ENCODE measurements at regions of chr10 and their contacts with region 1.

Region 1: DNA sequence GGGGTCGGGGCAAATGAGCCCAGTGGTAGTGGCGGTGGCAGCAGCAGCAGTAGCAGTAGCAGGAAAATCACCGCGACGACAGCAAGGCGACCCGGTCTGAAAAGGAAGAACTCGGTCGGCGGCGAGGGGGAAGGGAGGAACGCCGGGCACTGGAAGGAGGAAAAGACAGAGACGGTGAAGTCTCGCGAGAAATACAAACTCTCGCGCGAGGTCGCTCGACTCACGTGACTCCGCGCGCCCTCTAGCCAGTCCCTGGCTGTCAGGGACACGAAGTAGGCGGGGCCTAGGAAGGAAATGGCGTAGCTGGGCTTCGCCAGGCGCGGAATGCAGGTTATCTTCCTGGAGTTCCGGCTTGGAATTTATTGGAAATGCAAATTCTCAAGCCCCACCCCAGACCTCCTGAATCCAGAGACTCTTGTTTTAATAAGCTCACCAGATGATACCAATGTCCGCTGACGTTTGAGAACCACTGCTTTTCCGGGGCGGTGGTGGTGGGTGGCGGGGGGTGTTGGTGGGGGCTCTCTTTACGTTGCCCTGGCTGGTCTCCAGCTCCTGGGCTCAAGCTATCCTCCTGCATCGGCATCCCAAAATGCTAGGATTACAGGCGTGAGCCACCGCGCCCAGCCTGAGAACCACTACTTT is at the start of gene SMNDC1:
- DNase-seq: peak; percentile 99
- H3K4me3 Mint-ChIP-seq: peak within 1 kb of the TSS; percentile 95
- H3K27ac Mint-ChIP-seq: peak within 1 kb of the TSS; percentile 97
- H3K4me1 Mint-ChIP-seq: peaks cover 51% of the 10 kb centered on the region
- H3K27me3 Mint-ChIP-seq: no peaks in the 10 kb centered on the region
- total RNA-seq, gene SMNDC1: 42.4 to 46.2 TPM

Region 2: GRCh38 chr10:110273474-110273873 is 31.4 kb before region 1 on chr10:
- CTCF ChIA-PET with region 1: no interaction called
- intact Hi-C with region 1: loop called (anchors 2 kb)
- DNase-seq: peak; percentile 74
- H3K4me3 Mint-ChIP-seq: no peak overlapping the region
- H3K27ac Mint-ChIP-seq: no peak overlapping the region
- H3K4me1 Mint-ChIP-seq: peaks cover 49% of the 10 kb centered on the region
- H3K27me3 Mint-ChIP-seq: no peaks in the 10 kb centered on the region

Region 3: DNA sequence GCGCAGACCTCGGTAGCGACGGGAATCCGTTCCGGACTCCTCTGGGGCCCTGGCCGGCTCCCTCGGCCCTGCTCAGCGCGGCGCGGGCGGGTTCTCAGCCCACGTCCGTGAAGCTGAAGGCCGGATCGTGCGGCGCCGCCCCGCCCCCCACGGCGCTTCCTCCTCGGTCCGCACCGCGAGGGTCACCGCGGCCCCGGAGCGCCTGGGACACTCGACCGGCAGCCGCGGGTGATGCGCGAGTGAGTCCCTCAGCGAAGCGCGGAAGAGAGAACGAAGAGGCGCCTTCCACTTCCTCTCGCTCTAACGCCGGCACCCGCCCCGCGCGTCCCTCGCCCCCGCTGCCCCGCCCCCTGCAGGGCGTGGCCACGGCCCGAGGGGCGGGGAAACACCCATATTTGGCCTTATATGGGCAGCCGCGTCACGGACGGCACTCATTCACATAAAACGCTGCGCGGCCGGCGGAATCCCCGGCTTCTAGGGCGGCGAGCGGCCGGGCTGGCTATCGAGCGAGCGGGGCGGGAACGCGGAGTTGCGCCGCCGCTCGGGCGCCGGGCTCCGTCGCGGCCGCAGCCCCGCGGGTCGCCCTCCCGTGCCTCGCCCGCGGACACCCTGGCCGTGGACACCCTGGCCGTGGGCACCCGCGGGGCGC is 192.7 kb after region 1 on chr10 and contains the start of gene DUSP5:
- CTCF ChIA-PET with region 1: interaction called, 8 read pairs
- intact Hi-C with region 1: loop called (anchors 1 kb)
- DNase-seq: peak; percentile 94
- H3K4me3 Mint-ChIP-seq: peak within 1 kb of the TSS; percentile 97
- H3K27ac Mint-ChIP-seq: peak within 1 kb of the TSS; percentile 94
- H3K4me1 Mint-ChIP-seq: peaks cover 43% of the 10 kb centered on the region
- H3K27me3 Mint-ChIP-seq: no peaks in the 10 kb centered on the region
- total RNA-seq, gene DUSP5: 51.0 to 53.5 TPM

Region 4: DNA sequence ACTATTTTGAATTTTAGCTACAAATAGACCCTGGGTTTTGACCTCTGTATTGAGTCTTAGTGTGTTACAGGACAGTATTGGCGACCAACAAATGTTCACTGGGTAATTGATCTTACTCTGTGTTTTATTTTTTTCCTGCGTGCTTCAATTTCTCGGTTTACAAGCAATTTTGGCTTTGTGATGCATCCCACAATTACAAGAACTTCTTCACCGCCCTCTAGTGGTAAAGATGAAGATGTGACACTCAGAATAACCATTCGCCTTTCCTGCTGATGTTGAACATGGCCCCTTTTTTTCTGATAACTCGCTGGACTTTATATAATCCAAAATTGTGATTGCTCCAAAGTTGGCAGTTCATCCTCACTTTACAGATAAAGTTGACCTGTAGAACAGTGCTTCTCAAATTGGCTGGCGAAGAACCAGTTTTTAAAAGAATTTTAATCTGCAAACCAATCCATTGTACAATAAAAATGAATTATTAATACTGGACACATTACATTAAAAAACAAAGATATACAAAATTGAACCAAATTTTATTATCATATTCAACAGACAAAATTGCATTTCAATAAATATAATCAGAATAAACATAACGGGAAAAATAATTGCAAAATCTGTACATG is 242.3 kb after region 1 on chr10:
- CTCF ChIA-PET with region 1: interaction called, 73 read pairs
- intact Hi-C with region 1: loop called (anchors 1 kb)
- DNase-seq: no peak
- H3K4me3 Mint-ChIP-seq: no peak overlapping the region
- H3K27ac Mint-ChIP-seq: no peak overlapping the region
- H3K4me1 Mint-ChIP-seq: peaks cover 6% of the 10 kb centered on the region
- H3K27me3 Mint-ChIP-seq: peaks cover 19% of the 10 kb centered on the region

Region 5: GRCh38 chr10:110671788-110672579 is 367.1 kb after region 1 on chr10:
- CTCF ChIA-PET with region 1: interaction called, 6 read pairs
- intact Hi-C with region 1: loop called (anchors 1 kb)
- DNase-seq: peak; percentile 76
- H3K4me3 Mint-ChIP-seq: peak overlapping the region; percentile 75
- H3K27ac Mint-ChIP-seq: no peak overlapping the region
- H3K4me1 Mint-ChIP-seq: peaks cover 2% of the 10 kb centered on the region
- H3K27me3 Mint-ChIP-seq: no peaks in the 10 kb centered on the region

Region 6: DNA sequence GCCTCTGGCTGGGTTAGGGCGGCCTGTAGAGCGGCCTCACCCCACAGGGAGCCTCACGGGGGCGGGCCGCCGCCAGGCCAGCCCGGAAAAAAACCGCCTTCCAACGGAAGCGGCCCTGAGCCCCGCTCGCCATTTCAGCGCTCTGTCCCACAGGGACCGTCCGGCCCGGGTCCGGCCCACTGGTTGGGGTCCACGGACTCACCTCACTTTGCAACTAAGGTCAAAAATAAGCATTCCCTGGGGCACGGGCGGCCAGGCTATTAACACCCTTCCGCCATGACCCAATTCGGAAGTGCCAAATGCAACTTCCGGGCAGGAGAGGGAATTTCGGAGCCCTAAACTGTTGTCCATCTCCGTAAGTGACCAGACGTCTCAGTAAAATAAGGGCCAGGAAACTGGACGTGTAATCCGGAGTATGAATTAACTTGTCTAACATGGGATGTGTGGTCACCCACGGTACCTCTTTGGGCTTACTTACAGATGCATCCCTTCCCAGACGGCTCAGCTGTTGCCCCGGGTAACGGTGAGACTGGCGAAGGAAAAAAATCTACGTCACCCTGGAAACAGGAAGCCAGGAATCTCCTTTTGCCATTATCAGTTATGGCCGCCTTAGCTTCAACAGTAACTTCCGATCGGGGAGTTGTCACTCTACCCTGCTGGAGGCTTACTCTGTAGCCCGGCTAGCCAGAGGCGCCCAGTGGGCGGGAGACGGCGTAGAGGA is 613.9 kb after region 1 on chr10 and contains the start of gene BBIP1:
- CTCF ChIA-PET with region 1: no interaction called
- intact Hi-C with region 1: loop called (anchors 1 kb)
- DNase-seq: no peak
- H3K4me3 Mint-ChIP-seq: peak within 1 kb of the TSS; percentile 97
- H3K27ac Mint-ChIP-seq: peak within 1 kb of the TSS; percentile 98
- H3K4me1 Mint-ChIP-seq: peaks cover 32% of the 10 kb centered on the region
- H3K27me3 Mint-ChIP-seq: no peaks in the 10 kb centered on the region
- total RNA-seq, gene BBIP1: 37.2 to 42.6 TPM

Measured in activated naive CD4-positive, alpha-beta T cell treated with anti-CD3 and anti-CD28 coated beads for 36 hours (primary cell).